AG04450 (cell line): ENCODE measurements at regions of chr10 and their contacts with region 1.

Region 1: GRCh38 chr10:99612167-99612831 is 7.9 kb downstream of the SLC25A28 start:
- DNase-seq: peak; percentile 13
- H3K4me3 ChIP-seq: no peak overlapping the region
- H3K27ac ChIP-seq: no peak overlapping the region
- H3K27me3 ChIP-seq: no peaks in the 10 kb centered on the region
- CTCF ChIP-seq: peak; percentile 89

Region 2: GRCh38 chr10:99394761-99395386 is 217.4 kb before region 1 on chr10:
- CTCF ChIA-PET with region 1: interaction called, 73 read pairs
- POLR2A ChIA-PET with region 1: no interaction called
- DNase-seq: no peak
- H3K4me3 ChIP-seq: no peak overlapping the region
- H3K27ac ChIP-seq: no peak overlapping the region
- H3K27me3 ChIP-seq: peaks cover 4% of the 10 kb centered on the region
- CTCF ChIP-seq: no peak

Region 3: DNA sequence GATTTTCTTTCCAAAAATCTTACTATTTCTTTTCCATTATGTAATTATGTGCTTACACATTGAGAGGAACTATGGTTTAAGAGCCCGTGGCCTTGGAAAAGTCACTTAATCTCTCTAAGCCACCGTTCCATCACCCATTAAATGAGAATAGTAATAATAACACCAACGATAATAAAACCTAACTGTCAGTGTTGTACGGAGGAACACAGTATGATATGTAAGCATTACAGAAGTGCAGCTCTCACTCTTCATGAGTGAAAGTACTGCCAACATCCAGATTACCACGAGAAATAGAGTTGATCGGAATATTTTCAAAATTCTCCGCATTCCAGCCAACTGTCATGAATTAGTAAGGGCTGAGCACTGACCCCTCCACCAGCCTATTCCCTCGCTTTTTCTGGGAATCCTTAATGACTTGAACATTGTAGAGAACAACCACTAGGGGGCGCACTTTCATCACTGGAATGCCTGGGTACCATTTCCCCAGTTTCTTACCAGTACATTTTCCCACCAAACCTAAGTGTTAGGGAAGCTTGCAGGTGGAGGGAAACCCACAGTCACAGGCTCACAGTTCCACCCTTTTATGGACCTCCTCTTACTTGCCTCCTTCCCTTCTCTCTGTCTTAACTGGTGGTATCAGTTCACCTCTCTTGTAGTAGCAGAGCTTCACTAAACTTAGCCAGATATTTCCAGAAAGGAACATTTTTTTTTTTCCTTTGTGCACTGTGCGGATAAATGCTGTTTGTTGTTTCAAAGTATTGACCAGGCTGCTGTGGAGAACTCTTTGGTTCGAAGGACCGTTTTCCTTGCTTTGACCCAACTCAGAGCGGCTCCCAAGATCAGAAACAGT is 51.8 kb before region 1 on chr10:
- CTCF ChIA-PET with region 1: interaction called, 33 read pairs
- POLR2A ChIA-PET with region 1: no interaction called
- DNase-seq: no peak
- H3K4me3 ChIP-seq: no peak overlapping the region
- H3K27ac ChIP-seq: no peak overlapping the region
- H3K27me3 ChIP-seq: peaks cover 11% of the 10 kb centered on the region
- CTCF ChIP-seq: peak; percentile 69

Region 4: DNA sequence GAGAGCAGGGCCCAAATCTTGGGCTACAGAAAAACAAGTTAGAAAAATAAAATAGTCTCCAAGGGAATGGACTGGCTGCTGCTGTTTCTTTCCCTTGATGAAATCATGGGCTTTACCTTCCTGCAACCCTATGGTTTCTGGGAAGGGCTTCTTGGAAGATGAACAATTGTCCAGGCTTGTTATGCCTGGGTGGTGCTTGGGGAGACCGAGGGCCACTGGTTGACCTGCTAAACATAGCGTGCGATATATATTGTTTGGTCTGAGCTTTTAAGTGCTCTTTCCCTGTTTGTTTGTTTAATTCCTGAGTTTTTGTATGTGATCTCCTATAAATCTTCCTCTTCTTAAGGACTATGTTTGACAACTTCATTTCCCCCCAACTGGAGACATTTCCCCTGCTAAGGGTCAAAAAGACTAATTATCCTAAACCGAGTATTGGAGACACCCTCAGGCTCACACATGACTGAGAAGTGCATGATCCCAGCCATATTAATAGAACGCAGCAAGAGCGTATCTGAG is 30.0 kb before region 1 on chr10:
- CTCF ChIA-PET with region 1: no interaction called
- POLR2A ChIA-PET with region 1: no interaction called
- DNase-seq: no peak
- H3K4me3 ChIP-seq: no peak overlapping the region
- H3K27ac ChIP-seq: no peak overlapping the region
- H3K27me3 ChIP-seq: peaks cover 18% of the 10 kb centered on the region
- CTCF ChIP-seq: no peak

Region 5: GRCh38 chr10:99595770-99596465 is 16.4 kb before region 1 on chr10:
- CTCF ChIA-PET with region 1: interaction called, 21 read pairs
- POLR2A ChIA-PET with region 1: no interaction called
- DNase-seq: no peak
- H3K4me3 ChIP-seq: no peak overlapping the region
- H3K27ac ChIP-seq: no peak overlapping the region
- H3K27me3 ChIP-seq: peaks cover 16% of the 10 kb centered on the region
- CTCF ChIP-seq: no peak